PC-3 (cell line): ENCODE measurements at regions of chr15 and their contacts with region 1.

Region 1: GRCh38 chr15:45198337-45199135 is 10.8 kb upstream of the SHF start:
- DNase-seq: peak; percentile 98
- ATAC-seq: peak; percentile 61
- H3K4me3 ChIP-seq: peak overlapping the region; percentile 92
- H3K27ac ChIP-seq: no peak overlapping the region
- H3K4me1 ChIP-seq: 0 out of 2 replicates have a peak, but pooled peaks cover 4% of the 10 kb centered on the region
- H3K27me3 ChIP-seq: no peaks in the 10 kb centered on the region
- CTCF ChIP-seq: peak; percentile 94

Region 2: GRCh38 chr15:45048794-45049631 is 149.5 kb before region 1 on chr15:
- CTCF ChIA-PET with region 1: no interaction called
- POLR2A ChIA-PET with region 1: no interaction called
- intact Hi-C with region 1: no loop called
- DNase-seq: no peak
- ATAC-seq: no peak
- H3K4me3 ChIP-seq: no peak overlapping the region
- H3K27ac ChIP-seq: no peak overlapping the region
- H3K4me1 ChIP-seq: no peaks in the 10 kb centered on the region
- H3K27me3 ChIP-seq: no peaks in the 10 kb centered on the region
- CTCF ChIP-seq: no peak

Region 3: GRCh38 chr15:45126535-45127158 is 71.9 kb before region 1 on chr15:
- CTCF ChIA-PET with region 1: interaction called, 8 read pairs
- POLR2A ChIA-PET with region 1: no interaction called
- intact Hi-C with region 1: loop called (anchors 10 kb)
- DNase-seq: peak; percentile 76
- ATAC-seq: peak; percentile 60
- H3K4me3 ChIP-seq: no peak overlapping the region
- H3K27ac ChIP-seq: no peak overlapping the region
- H3K4me1 ChIP-seq: peaks cover 15% of the 10 kb centered on the region
- H3K27me3 ChIP-seq: no peaks in the 10 kb centered on the region
- CTCF ChIP-seq: peak; percentile 96

Region 4: DNA sequence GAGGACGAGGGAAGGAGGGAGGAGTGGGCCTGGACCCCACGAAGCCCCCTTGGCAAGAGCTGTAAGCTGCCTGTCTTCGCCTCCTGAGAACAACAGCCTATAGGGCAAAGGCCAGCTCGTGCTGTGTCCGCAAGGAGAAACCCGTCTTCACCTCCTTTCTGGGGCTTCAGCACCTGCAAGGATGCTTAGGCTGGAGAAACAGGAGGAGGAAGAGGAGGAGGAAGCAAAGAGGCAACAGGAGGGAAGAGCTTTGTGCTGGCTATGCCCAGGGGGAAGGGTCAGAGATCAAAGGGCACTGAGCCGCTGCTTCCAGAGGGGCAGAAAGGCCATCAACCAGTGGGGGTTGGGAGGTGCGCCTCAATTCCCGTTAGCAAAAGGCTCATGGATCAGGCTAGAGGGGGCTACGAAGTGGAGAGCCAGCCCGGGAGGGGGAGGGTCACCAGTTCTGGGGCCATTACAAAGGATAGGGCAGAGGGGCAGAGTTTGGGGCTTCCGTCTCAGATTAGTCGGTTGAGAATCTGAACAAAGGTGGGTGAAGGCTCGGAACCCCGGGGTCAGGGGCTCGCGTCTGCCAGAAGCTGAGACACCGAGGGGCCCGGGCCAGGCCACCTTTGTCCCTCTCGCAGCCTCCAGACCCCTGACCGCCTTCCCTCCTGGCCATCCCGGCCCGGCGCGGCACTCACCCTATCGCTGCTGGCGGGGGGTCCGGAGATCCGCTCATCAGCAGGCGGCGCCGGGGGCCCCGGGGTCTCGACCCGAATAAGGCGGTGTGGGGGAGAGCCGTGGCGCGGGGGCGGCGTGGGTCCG is 11.6 kb before region 1 on chr15:
- CTCF ChIA-PET with region 1: interaction called, 14 read pairs
- POLR2A ChIA-PET with region 1: interaction called, 3 read pairs
- intact Hi-C with region 1: no loop called
- DNase-seq: no peak
- ATAC-seq: no peak
- H3K4me3 ChIP-seq: no peak overlapping the region
- H3K27ac ChIP-seq: no peak overlapping the region
- H3K4me1 ChIP-seq: peaks cover 14% of the 10 kb centered on the region
- H3K27me3 ChIP-seq: no peaks in the 10 kb centered on the region
- CTCF ChIP-seq: no peak

Region 5: DNA sequence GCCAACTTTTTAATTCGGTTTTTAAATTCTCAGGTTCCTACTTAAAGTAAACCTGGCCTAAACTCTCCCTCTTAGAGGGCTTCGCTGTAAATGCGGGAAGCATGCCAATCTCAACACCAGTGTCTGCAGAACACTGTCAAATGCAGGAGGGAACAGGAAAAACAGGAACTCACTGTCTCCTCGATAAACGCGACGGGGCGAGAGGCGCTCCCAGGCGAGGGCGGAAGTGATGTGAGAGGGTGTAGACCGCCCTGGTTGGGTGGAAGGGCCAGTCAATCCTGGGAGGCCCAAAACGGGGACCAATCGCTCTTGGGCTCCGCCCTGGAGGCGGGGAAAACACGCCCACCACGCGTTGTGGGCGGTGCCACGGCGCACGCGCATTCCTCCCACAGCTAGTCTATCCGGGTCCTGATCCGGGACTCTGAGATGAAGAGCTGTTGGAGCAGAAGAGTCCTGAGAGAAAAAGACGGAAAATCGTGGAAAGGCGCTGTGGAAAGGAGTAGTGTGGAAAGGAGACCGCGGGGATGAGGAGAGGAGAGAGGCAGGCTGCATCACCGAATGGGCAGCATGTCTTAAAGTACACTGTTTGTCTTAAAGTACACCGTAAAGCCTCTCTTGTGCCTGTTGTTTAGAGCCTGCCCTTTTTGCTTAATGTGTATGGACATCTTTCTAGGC is 80.6 kb after region 1 on chr15:
- CTCF ChIA-PET with region 1: interaction called, 4 read pairs
- POLR2A ChIA-PET with region 1: interaction called, 5 read pairs
- intact Hi-C with region 1: loop called (anchors 1 kb)
- DNase-seq: peak; percentile 99
- ATAC-seq: peak; percentile 99
- H3K4me3 ChIP-seq: peak overlapping the region; percentile 75
- H3K27ac ChIP-seq: peak overlapping the region; percentile 36
- H3K4me1 ChIP-seq: peaks cover 13% of the 10 kb centered on the region
- H3K27me3 ChIP-seq: no peaks in the 10 kb centered on the region
- CTCF ChIP-seq: no peak